Tibial artery (tissue), 4 donors: ENCODE measurements at regions of chr9 and their contacts with region 1.

Region 1: GRCh38 chr9:124040935-124041816 is 29.6 kb downstream of the LHX2 start:
- DNase-seq: no peak
- H3K4me3 ChIP-seq: peak overlapping the region; percentile 32 to 50
- H3K27ac ChIP-seq: no peak overlapping the region
- H3K4me1 ChIP-seq: peaks cover 0 to 40% (median 28%) of the 10 kb centered on the region in 4 donors
- H3K27me3 ChIP-seq: peaks cover 0 to 76% of the 10 kb centered on the region in 2 donors
- CTCF ChIP-seq: peak; percentile 91 to 94

Region 2: DNA sequence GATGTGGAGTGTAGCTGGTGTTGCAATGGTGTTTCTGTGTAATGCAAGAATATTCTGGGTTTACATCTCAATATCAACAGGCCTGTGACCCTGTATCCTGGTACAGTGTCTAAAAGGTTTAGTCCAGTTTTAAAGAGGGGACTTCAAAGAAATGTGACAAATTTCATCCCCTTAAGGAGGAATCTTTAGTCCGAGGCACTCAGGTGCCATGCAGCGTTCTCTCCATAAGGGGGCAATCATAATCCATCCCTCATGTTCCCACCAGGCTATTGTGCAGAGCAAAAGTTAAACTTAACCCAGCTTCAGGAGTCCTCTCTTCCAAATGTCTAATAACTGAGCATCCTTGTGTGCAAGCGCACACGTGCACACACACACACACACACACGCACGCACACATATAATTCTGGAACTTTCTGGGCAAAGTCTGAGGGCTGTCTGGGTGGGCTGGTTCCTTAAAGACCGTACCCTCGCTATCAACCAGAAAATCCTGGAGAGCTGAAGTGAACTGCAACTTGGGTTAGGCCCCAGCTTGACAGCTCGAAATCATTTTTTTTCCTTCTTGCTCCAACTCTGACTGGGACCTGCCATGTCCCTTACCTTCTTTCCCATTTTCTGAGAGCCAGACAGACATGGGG is 639.2 kb before region 1 on chr9:
- intact Hi-C with region 1: loop called (anchors 10 kb)
- DNase-seq: no peak
- H3K4me3 ChIP-seq: peak overlapping the region; percentile 34 to 44
- H3K27ac ChIP-seq: peak overlapping the region; percentile 74 to 80
- H3K4me1 ChIP-seq: peaks cover 0 to 18% (median 5%) of the 10 kb centered on the region in 4 donors
- H3K27me3 ChIP-seq: no peaks in the 10 kb centered on the region
- CTCF ChIP-seq: peak; percentile 75 to 84

Region 3: GRCh38 chr9:123544007-123544827 is 497.0 kb before region 1 on chr9:
- intact Hi-C with region 1: loop called (anchors 5 kb)
- DNase-seq: no peak
- H3K4me3 ChIP-seq: no peak overlapping the region
- H3K27ac ChIP-seq: no peak overlapping the region
- H3K4me1 ChIP-seq: peaks cover 0 to 7% (median 2%) of the 10 kb centered on the region in 4 donors
- H3K27me3 ChIP-seq: no peaks in the 10 kb centered on the region
- CTCF ChIP-seq: peak; percentile 64 to 73

Region 4: DNA sequence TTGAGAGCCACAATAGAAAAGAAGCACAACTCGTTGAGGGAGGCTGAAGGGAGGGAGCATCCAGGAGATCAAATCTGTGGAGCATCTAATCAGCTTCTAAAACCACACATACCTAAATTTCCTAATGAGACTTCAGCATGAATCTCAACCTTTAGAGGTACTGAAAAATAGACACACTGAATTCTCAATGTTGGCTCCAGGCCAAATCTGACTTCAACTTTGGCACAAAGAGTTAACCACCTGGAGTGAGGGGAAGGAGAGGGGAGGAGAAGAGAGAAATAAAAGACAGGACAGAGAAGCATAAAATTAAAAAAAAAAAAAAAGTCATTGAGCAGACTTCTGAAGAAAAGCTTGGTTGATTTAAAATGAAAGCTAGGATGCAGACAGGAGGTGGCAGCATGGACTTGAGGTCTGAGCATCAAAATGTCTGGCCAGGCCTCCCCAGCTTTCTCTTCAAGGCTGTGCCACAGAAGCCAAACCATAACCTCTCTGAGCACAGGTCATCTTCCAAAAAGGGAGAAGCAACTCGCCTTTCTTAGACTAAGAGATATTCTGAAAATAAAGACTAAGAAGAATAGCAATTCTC is 316.9 kb before region 1 on chr9:
- intact Hi-C with region 1: loop called (anchors 5 kb)
- DNase-seq: no peak
- H3K4me3 ChIP-seq: no peak overlapping the region
- H3K27ac ChIP-seq: no peak overlapping the region
- H3K4me1 ChIP-seq: no peaks in the 10 kb centered on the region
- H3K27me3 ChIP-seq: no peaks in the 10 kb centered on the region
- CTCF ChIP-seq: peak; percentile 29 to 40